Activated naive CD4-positive, alpha-beta T cell treated with anti-CD3 and anti-CD28 coated beads for 36 hours (primary cell): ENCODE measurements at regions of chr6 and their contacts with region 1.

Region 1: DNA sequence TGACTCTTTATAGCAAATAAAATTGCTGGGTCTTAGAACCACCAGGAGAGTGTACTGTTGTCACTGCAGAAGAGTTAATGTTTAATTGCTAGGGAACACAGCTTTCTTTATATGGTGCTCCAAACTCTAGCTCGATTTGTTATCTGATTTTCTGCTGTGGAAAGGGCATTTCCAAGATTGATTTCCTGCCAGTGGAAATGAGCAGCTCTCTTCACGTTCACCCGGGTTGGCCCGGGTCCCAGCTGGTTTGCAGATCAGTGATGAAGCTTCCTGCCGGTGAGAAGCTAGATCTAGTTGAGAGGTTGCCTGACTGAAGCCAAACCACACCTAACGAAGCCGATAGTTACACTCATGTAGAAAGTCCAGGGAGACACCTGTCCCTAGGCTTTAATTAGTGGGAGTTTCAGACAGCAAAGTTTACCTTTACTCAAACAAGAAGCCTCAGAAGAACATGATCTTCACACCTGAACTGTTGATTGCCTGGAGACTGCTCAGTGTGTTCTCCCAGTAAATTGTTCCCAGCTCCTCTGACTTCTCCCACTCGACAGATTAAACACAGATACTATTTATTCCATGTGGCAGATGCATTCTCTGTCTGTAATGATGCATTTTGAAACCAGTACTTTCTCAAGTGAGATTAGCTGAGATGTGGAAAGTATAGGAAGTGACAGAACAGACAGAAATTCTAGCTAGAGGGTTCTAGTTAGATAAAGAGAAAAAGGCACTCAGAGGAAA is 27.8 kb downstream of the PAQR8 start:
- DNase-seq: peak; percentile 79
- H3K4me3 Mint-ChIP-seq: peak overlapping the region; percentile 14
- H3K27ac Mint-ChIP-seq: peak overlapping the region; percentile 81
- H3K4me1 Mint-ChIP-seq: peaks cover 75% of the 10 kb centered on the region
- H3K27me3 Mint-ChIP-seq: no peaks in the 10 kb centered on the region

Region 2: DNA sequence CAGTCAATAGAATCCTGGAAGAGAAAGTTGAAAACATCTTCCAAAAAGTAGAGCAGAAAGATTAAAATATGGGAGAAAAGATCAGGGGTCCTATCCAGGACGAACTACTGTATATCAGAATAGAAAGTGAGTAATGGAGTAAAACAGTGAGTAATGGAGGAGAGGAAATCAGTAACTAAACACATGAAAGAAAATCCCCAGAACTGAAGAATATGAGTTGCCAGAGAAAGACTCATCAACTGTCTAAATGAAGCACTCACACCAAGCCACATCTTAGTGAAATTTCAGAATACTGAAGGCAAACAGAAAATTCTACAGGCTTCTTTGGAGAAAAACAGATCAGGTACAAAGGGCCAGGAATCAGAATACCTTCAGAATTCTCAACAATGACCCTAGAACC is 188.7 kb before region 1 on chr6:
- CTCF ChIA-PET with region 1: no interaction called
- intact Hi-C with region 1: loop called (anchors 1 kb)
- DNase-seq: no peak
- H3K4me3 Mint-ChIP-seq: no peak overlapping the region
- H3K27ac Mint-ChIP-seq: no peak overlapping the region
- H3K4me1 Mint-ChIP-seq: peaks cover 13% of the 10 kb centered on the region
- H3K27me3 Mint-ChIP-seq: peaks cover 15% of the 10 kb centered on the region

Region 3: GRCh38 chr6:52297433-52297832 is 92.4 kb before region 1 on chr6:
- CTCF ChIA-PET with region 1: no interaction called
- intact Hi-C with region 1: loop called (anchors 1 kb)
- DNase-seq: peak; percentile 51
- H3K4me3 Mint-ChIP-seq: no peak overlapping the region
- H3K27ac Mint-ChIP-seq: peak overlapping the region; percentile 60
- H3K4me1 Mint-ChIP-seq: peaks cover 35% of the 10 kb centered on the region
- H3K27me3 Mint-ChIP-seq: no peaks in the 10 kb centered on the region

Region 4: GRCh38 chr6:52337633-52338290 is 52.0 kb before region 1 on chr6:
- CTCF ChIA-PET with region 1: interaction called, 4 read pairs
- intact Hi-C with region 1: loop called (anchors 2 kb)
- DNase-seq: no peak
- H3K4me3 Mint-ChIP-seq: no peak overlapping the region
- H3K27ac Mint-ChIP-seq: no peak overlapping the region
- H3K4me1 Mint-ChIP-seq: peaks cover 56% of the 10 kb centered on the region
- H3K27me3 Mint-ChIP-seq: no peaks in the 10 kb centered on the region

Region 5: DNA sequence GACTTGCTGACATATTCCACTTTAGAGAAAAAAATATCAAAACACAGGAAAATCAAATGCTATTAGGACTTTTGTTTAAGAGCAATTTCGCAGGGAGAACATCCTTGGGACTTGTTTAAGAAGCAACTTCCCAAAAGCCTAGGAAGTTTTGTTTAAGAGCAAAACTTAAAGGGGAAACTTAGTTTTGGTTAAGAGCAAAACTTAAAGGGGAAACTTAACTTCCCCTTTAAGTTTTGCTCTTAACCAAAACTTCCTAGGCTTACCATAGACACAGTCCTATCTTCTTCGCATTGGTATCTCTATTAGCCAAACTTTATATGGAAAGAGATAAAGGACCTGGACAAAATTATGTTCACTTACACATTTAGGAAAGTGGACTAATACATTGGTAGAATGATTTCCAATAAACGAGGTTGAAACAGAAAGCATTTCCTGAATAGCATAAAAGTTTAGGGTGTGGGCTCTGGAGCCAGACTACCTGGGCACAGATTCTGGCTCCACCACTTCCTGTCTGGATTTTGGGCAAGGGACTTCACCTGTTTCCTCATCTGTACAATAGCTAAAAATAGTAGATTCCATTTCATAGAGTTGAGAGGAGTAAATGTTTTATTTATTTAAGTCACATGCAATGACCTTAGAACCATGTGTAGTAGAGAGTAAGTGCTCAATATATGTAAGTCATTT is 12.1 kb before region 1 on chr6:
- CTCF ChIA-PET with region 1: interaction called, 11 read pairs
- intact Hi-C with region 1: loop called (anchors 1 kb)
- DNase-seq: peak; percentile 41
- H3K4me3 Mint-ChIP-seq: no peak overlapping the region
- H3K27ac Mint-ChIP-seq: no peak overlapping the region
- H3K4me1 Mint-ChIP-seq: peaks cover 59% of the 10 kb centered on the region
- H3K27me3 Mint-ChIP-seq: no peaks in the 10 kb centered on the region

Region 6: GRCh38 chr6:52454556-52454955 is 64.8 kb after region 1 on chr6:
- CTCF ChIA-PET with region 1: no interaction called
- intact Hi-C with region 1: no loop called
- DNase-seq: no peak
- H3K4me3 Mint-ChIP-seq: no peak overlapping the region
- H3K27ac Mint-ChIP-seq: no peak overlapping the region
- H3K4me1 Mint-ChIP-seq: no peaks in the 10 kb centered on the region
- H3K27me3 Mint-ChIP-seq: no peaks in the 10 kb centered on the region

Region 7: GRCh38 chr6:52557389-52558265 is 167.8 kb after region 1 on chr6:
- CTCF ChIA-PET with region 1: no interaction called
- intact Hi-C with region 1: no loop called
- DNase-seq: no peak
- H3K4me3 Mint-ChIP-seq: no peak overlapping the region
- H3K27ac Mint-ChIP-seq: no peak overlapping the region
- H3K4me1 Mint-ChIP-seq: peaks cover 10% of the 10 kb centered on the region
- H3K27me3 Mint-ChIP-seq: no peaks in the 10 kb centered on the region

Region 8: GRCh38 chr6:52984247-52984646 is 594.5 kb after region 1 on chr6:
- CTCF ChIA-PET with region 1: no interaction called
- intact Hi-C with region 1: loop called (anchors 5 kb)
- DNase-seq: peak; percentile 81
- H3K4me3 Mint-ChIP-seq: no peak overlapping the region
- H3K27ac Mint-ChIP-seq: peak overlapping the region; percentile 82
- H3K4me1 Mint-ChIP-seq: peaks cover 63% of the 10 kb centered on the region
- H3K27me3 Mint-ChIP-seq: peaks cover 8% of the 10 kb centered on the region